ENCODE measurements at regions of chr7 and their contacts with region 1.

Region 1: DNA sequence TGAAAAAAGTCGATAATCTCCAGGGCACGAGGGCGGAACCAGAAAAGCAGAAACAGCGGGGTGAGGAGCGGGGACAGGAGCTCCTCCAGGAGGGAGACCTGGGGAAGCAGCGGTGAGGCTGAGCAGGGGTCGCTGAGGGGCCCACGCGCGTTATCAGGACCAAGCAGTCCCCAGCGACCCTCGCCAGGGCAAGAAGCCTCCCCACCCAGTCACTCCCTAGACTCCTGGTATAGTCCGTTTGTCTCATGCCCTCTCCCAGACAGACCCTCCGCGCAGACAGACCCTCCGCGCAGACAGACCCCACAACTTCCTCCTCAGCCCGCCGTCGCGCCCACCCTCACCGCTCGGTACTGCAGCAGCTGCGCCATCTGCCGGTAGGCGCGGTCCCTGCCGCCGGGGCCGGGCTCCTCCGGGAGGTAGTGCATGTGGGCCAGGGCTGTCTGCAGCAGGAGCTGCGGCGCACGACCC is 6.3 kb downstream of the ATG9B start:
- DNase-seq: peak; percentile 30 to 73
- H3K4me3 ChIP-seq: peak overlapping the region in 2 of 3 donors; percentile 34 to 64
- H3K27ac ChIP-seq: no peak overlapping the region
- H3K4me1 ChIP-seq: peaks cover 8 to 10% of the 10 kb centered on the region in 2 donors
- H3K27me3 ChIP-seq: peaks cover 9 to 44% of the 10 kb centered on the region in 2 donors
- CTCF ChIP-seq: peak; percentile 73 to 81 (median 76)
- POLR2A ChIP-seq: no peak

Region 2: GRCh38 chr7:151110941-151111645 is 93.1 kb after region 1 on chr7:
- intact Hi-C with region 1: loop called (anchors 10 kb)
- DNase-seq: peak; percentile 70 to 83
- H3K4me3 ChIP-seq: peak overlapping the region in 1 of 3 donors; percentile 5
- H3K27ac ChIP-seq: no peak overlapping the region
- H3K4me1 ChIP-seq: peaks cover 0 to 9% of the 10 kb centered on the region in 2 donors
- H3K27me3 ChIP-seq: no peaks in the 10 kb centered on the region
- CTCF ChIP-seq: peak; percentile 82 to 90 (median 89)
- POLR2A ChIP-seq: no peak